Caco-2 (cell line): ENCODE measurements at regions of chr3 and their contacts with region 1.

Region 1: DNA sequence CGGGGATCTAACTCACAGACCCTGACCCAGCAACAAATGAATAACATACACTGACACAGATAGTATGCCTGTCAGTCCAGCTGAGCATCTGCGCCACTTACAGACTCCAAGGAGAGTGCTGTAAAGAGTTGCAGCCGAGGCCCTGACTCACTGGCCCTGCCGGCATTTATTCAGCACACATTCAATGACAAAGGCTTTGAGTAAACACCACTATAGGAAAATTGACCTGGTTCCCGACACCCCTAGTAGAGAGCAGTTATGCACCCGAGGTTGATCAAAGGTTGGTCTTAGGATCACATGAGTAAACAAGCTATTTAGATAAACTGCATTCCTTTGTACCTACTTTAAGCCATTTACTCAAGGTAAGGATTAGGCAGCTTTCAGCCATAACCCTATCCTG is 22.7 kb downstream of the LARS2 start:
- DNase-seq: peak; percentile 57 to 72
- H3K4me3 ChIP-seq: no peak overlapping the region
- H3K4me3 Mint-ChIP-seq: no peak overlapping the region
- H3K27ac Mint-ChIP-seq: peak overlapping the region; percentile 22
- H3K4me1 ChIP-seq: peaks cover 29% of the 10 kb centered on the region
- H3K4me1 Mint-ChIP-seq: peaks cover 10% of the 10 kb centered on the region
- H3K27me3 ChIP-seq: no peaks in the 10 kb centered on the region
- H3K27me3 Mint-ChIP-seq: no peaks in the 10 kb centered on the region
- CTCF ChIP-seq: no peak

Region 2: GRCh38 chr3:45479621-45480035 is 68.5 kb after region 1 on chr3:
- CTCF ChIA-PET with region 1: no interaction called
- POLR2A ChIA-PET with region 1: no interaction called
- intact Hi-C with region 1: loop called (anchors 1 kb)
- DNase-seq: peak in 1 of 2 experiments; percentile 19
- H3K4me3 ChIP-seq: no peak overlapping the region
- H3K4me3 Mint-ChIP-seq: peak overlapping the region; percentile 42
- H3K27ac Mint-ChIP-seq: peak overlapping the region; percentile 84
- H3K4me1 ChIP-seq: peaks cover 26% of the 10 kb centered on the region
- H3K4me1 Mint-ChIP-seq: peaks cover 23% of the 10 kb centered on the region
- H3K27me3 ChIP-seq: no peaks in the 10 kb centered on the region
- H3K27me3 Mint-ChIP-seq: no peaks in the 10 kb centered on the region
- CTCF ChIP-seq: no peak